Head of caudate nucleus (tissue), 42 donors: ENCODE measurements at regions of chr10 and their contacts with region 1.

Region 1: GRCh38 chr10:51001587-51001986 is 72.7 kb upstream of the PRKG1 start:
- DNase-seq: peak in 1 of 42 donors; percentile 9

Region 2: GRCh38 chr10:50846753-50847152 is 154.8 kb before region 1 on chr10:
- intact Hi-C with region 1: no loop called
- DNase-seq: no peak

Region 3: GRCh38 chr10:50885097-50885859 is 116.3 kb before region 1 on chr10 and contains the start of gene A1CF:
- intact Hi-C with region 1: no loop called
- DNase-seq: no peak

Region 4: GRCh38 chr10:51083356-51083853 is 81.8 kb after region 1 on chr10:
- intact Hi-C with region 1: no loop called
- DNase-seq: no peak

Region 5: GRCh38 chr10:52215745-52216361 is 1214.3 kb after region 1 on chr10:
- intact Hi-C with region 1: loop called (anchors 10 kb)
- DNase-seq: peak in 33 of 42 donors; percentile 8 to 85 (median 51)